GM10248 (cell line): ENCODE measurements at regions of chr6 and their contacts with region 1.

Region 1: DNA sequence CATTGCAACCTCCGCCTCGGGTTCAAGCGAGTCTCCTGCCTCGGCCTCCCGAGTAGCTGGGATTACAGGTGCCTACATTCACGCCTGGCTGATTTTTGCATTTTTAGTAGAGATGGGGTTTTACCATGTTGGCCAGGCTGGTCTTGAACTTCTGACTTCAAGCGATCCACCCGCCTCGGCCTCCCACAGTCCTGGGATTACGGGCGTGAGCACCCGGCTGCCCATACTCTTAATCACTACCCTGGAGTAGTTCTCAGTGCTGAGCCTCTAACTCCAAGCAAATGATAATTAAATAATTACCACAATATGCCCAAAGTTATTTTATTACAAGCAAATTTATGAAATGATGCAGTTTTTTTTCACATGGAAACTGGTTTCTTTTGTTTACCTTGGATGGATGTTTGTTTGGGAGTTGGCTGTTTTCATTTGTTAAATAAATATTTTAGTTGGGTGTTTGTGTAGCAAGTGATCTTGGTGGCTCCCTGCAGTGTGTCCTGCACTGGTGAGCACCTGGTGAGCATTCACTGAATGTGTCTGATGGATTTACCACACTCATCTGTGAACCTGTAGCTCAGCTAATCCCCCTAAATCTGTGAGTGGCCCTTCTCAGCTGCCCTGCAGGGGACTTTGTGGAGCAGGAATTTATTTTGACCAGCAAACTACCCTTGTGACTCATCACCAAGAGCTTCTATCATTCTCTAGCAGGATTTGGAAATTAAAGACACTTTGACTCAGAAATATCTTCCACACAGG is 36.9 kb downstream of the UTRN start:
- DNase-seq: no peak
- CTCF ChIP-seq: no peak

Region 2: DNA sequence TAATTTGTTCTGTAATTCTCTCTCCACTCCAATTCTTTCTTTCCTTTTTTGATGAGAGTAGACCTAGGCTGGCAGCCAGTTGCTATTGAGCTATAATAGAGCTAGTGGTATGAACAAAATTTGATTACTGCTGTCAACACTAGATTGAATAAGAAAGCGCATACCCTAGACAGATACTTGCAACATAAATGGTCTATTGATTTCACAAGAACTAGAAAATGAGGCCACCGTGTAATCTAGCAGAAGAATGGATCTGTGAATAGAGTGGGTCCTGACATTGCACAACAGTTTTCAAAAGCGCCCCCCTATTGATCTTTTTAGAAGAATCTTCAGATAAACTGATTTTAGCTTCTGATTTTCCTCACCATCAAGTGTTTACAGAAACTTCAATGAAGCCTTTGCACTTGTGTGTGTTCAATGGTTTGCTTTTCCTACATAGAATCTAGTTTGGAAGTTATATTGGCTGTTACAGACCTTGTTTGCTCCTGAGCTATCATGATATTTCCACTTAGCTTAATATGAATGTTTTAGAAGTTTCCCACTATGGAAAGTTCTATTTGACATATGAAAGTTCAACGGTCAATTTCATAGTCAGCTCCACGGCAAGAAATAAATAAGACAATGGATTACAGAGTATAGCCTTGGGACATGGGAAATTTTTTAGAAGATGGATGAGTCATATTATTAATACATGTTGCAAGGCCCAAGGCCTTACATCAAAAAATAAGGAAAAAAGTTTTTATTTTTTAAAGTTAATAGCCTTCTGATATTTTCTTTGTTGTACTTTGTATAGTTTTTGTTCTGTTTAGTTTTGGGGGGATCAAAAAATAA is 18.7 kb after region 1 on chr6:
- CTCF ChIA-PET with region 1: interaction called, 4 read pairs
- POLR2A ChIA-PET with region 1: interaction called, 12 read pairs
- DNase-seq: no peak
- CTCF ChIP-seq: no peak

Region 3: GRCh38 chr6:144447472-144447871 is 125.5 kb after region 1 on chr6:
- CTCF ChIA-PET with region 1: no interaction called
- POLR2A ChIA-PET with region 1: no interaction called
- DNase-seq: no peak
- CTCF ChIP-seq: no peak